MCF 10A (cell line): ENCODE measurements at regions of chr3 and their contacts with region 1.

Region 1: GRCh38 chr3:82824491-82824890 is 1063.0 kb upstream of the GBE1 start:
- DNase-seq: no peak
- H3K4me3 Mint-ChIP-seq: no peak overlapping the region
- H3K27ac Mint-ChIP-seq: no peak overlapping the region
- H3K4me1 Mint-ChIP-seq: no peaks in the 10 kb centered on the region
- H3K27me3 Mint-ChIP-seq: no peaks in the 10 kb centered on the region
- CTCF ChIP-seq: no peak

Region 2: GRCh38 chr3:82745544-82745943 is 78.9 kb before region 1 on chr3:
- CTCF ChIA-PET with region 1: no interaction called
- POLR2A ChIA-PET with region 1: no interaction called
- intact Hi-C with region 1: no loop called
- DNase-seq: no peak
- H3K4me3 Mint-ChIP-seq: no peak overlapping the region
- H3K27ac Mint-ChIP-seq: no peak overlapping the region
- H3K4me1 Mint-ChIP-seq: peaks cover 7% of the 10 kb centered on the region
- H3K27me3 Mint-ChIP-seq: no peaks in the 10 kb centered on the region
- CTCF ChIP-seq: no peak

Region 3: GRCh38 chr3:82850115-82850514 is 25.6 kb after region 1 on chr3:
- CTCF ChIA-PET with region 1: no interaction called
- POLR2A ChIA-PET with region 1: no interaction called
- intact Hi-C with region 1: no loop called
- DNase-seq: no peak
- H3K4me3 Mint-ChIP-seq: no peak overlapping the region
- H3K27ac Mint-ChIP-seq: no peak overlapping the region
- H3K4me1 Mint-ChIP-seq: no peaks in the 10 kb centered on the region
- H3K27me3 Mint-ChIP-seq: no peaks in the 10 kb centered on the region
- CTCF ChIP-seq: no peak

Region 4: DNA sequence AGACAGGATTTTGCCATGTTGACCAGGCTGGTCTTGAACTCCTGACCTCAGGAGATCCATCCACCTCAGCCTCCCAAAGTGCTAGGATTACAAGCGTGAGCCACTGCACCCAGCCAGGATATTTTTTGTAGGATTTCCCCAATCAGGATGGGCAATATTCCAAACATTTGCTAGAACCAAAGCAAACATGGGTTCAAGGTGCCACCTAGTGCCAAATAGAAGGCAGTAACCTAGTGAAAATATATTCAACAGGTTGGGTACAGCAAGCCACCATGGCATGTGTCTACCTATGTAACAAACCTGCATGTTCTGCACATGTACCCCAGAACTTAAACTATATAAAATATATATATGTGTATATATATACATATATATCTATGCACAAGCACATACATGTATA is 1948.3 kb after region 1 on chr3:
- CTCF ChIA-PET with region 1: no interaction called
- POLR2A ChIA-PET with region 1: no interaction called
- intact Hi-C with region 1: loop called (anchors 5 kb)
- DNase-seq: peak; percentile 38
- H3K4me3 Mint-ChIP-seq: no peak overlapping the region
- H3K27ac Mint-ChIP-seq: no peak overlapping the region
- H3K4me1 Mint-ChIP-seq: no peaks in the 10 kb centered on the region
- H3K27me3 Mint-ChIP-seq: no peaks in the 10 kb centered on the region
- CTCF ChIP-seq: no peak